ENCODE measurements at regions of chr12 and their contacts with region 1.

Region 1: GRCh38 chr12:53952871-53953734 is 1.6 kb upstream of the HOXC12 start:
- DNase-seq: peak; percentile 77 to 85
- H3K4me3 ChIP-seq: peak overlapping the region; percentile 54
- H3K27ac ChIP-seq: no peak overlapping the region
- H3K4me1 ChIP-seq: peaks cover 23% of the 10 kb centered on the region
- H3K27me3 ChIP-seq: no peaks in the 10 kb centered on the region
- CTCF ChIP-seq: no peak

Region 2: GRCh38 chr12:53770281-53770680 is 182.8 kb before region 1 on chr12:
- CTCF ChIA-PET with region 1: interaction called, 3 read pairs
- POLR2A ChIA-PET with region 1: no interaction called
- intact Hi-C with region 1: loop called (anchors 1 kb)
- DNase-seq: peak in 1 of 2 experiments; percentile 92
- H3K4me3 ChIP-seq: no peak overlapping the region
- H3K27ac ChIP-seq: peak overlapping the region; percentile 53
- H3K4me1 ChIP-seq: peaks cover 39% of the 10 kb centered on the region
- H3K27me3 ChIP-seq: no peaks in the 10 kb centered on the region
- CTCF ChIP-seq: no peak

Region 3: GRCh38 chr12:53805127-53805466 is 148.0 kb before region 1 on chr12:
- CTCF ChIA-PET with region 1: interaction called, 12 read pairs
- POLR2A ChIA-PET with region 1: no interaction called
- intact Hi-C with region 1: no loop called
- DNase-seq: peak in 1 of 2 experiments; percentile 78
- H3K4me3 ChIP-seq: peak overlapping the region; percentile 32; the same call in 1 of the 2 replicates
- H3K27ac ChIP-seq: peak overlapping the region; percentile 96
- H3K4me1 ChIP-seq: peaks cover 74% of the 10 kb centered on the region
- H3K27me3 ChIP-seq: no peaks in the 10 kb centered on the region
- CTCF ChIP-seq: no peak

Region 4: GRCh38 chr12:53844989-53845844 is 107.9 kb before region 1 on chr12:
- CTCF ChIA-PET with region 1: no interaction called
- POLR2A ChIA-PET with region 1: no interaction called
- intact Hi-C with region 1: no loop called
- DNase-seq: peak; percentile 89 to 93
- H3K4me3 ChIP-seq: peak overlapping the region; percentile 6; the same call in 1 of the 2 replicates
- H3K27ac ChIP-seq: peak overlapping the region; percentile 80
- H3K4me1 ChIP-seq: peaks cover 45% of the 10 kb centered on the region
- H3K27me3 ChIP-seq: no peaks in the 10 kb centered on the region
- CTCF ChIP-seq: no peak

Region 5: DNA sequence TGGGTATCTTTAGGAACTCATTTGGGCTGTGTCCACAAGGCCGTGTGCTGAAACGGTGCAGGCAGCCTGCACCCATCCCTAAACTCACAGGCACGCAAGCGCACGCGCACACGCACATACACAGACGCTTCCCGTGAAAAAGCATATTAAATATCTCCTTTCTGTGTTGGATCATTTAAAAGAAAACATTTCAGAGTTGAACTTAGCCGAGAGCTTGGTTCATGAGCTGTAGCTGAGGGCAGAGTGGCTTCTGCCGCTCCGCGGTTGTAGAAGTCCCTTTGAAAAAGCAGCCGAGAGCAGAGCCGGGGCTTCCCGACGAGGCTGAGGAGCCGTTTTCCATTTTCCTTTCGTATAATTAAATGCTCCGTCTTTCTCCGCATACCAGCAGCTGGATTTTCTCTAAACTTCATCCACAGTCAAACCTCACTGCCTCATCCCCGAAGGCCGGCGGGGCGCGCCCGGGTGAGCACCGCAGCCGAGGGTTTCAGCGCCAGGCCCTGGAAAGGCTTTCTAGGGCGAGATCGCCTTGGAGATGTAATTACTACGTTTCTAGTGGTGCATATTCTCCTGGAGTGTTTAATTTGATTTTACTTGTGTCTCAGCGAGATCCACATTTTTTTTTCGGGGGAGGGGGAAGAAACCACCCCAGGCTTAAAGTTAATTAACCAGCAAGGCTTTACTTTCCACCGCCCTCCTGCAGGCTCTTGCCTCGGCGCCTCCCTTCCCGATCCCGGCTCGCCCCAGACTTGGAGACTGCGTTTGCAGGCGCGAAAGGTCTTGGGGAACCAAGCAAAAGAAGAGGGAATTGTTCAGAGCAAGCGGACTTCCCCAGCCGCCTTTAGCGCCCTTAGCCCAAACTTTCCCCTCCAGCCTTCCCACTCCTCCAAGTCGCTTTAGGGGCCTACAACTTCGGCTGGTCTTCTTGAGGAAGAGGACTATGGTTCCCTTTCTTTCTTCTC is 17.4 kb before region 1 on chr12:
- CTCF ChIA-PET with region 1: interaction called, 12 read pairs
- POLR2A ChIA-PET with region 1: no interaction called
- intact Hi-C with region 1: no loop called
- DNase-seq: no peak
- H3K4me3 ChIP-seq: no peak overlapping the region
- H3K27ac ChIP-seq: no peak overlapping the region
- H3K4me1 ChIP-seq: peaks cover 5% of the 10 kb centered on the region; the same call in 1 of the 2 replicates
- H3K27me3 ChIP-seq: no peaks in the 10 kb centered on the region
- CTCF ChIP-seq: no peak

Measured in PC-9 (cell line).